Cardiac septum (tissue), 1 donor: ENCODE measurements at regions of chr6 and their contacts with region 1.

Region 1: GRCh38 chr6:141464490-141464889 is 668.2 kb upstream of the GJE1 start:
- DNase-seq: no peak

Region 2: DNA sequence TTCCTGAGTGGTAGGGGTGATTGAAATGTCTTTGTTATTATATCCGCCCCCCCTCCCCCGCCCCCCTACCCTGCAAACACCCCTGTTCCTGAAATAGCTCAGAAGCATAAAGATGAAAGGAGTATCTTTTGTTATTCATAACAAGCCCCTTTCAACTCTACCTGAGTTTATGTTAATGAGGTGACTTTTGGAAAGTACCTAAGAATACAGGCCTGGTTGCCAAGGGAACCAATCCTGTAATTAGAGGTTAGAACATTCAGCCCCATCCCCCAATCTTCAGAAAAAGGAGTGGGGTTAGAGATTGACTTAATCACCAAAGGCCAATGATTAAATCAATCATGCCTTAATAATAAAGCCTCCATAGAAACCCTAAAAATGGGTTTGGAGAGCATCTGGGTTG is 310.9 kb before region 1 on chr6:
- intact Hi-C with region 1: loop called (anchors 10 kb)
- DNase-seq: no peak

Region 3: GRCh38 chr6:141421376-141421775 is 43.1 kb before region 1 on chr6:
- intact Hi-C with region 1: no loop called
- DNase-seq: no peak

Region 4: DNA sequence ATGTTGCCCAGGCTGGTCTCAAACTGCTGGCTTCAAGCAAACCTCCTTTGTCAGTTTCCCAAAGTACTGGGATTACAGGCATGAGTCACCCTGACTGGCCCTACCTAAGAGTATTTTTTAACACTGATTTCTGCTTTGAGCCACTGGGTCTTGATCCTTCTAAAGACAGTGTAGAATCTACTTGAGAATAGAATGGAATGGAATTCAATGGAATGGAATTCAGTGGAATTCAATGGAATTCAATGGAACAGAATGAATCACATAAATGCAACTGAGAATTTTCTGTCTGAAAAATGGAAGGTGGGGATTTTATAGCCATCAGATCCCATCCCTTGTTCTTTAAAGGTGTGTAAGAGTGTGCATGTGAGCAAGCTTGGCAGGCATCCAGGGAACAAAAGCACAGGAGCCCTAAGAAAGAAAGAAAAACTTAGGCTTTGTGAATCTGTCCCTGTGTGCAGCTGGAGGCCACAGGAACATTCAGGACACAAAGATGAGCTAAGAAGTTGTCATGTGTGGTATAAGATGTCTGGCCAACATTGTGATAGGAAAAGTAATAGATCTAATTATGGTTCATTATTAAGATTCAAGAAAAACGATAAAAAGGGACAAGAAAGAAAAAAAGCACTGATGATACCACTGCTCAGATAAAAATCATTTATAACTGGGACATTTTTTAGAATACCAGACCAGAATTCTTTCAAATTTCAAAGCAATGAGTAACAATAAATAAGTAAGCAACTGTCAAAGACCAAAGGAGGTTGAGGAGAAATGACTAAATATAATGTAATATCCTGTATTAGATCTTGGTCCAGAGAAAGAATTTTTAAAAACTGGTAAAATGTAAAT is 12.8 kb before region 1 on chr6:
- intact Hi-C with region 1: no loop called
- DNase-seq: no peak

Region 5: DNA sequence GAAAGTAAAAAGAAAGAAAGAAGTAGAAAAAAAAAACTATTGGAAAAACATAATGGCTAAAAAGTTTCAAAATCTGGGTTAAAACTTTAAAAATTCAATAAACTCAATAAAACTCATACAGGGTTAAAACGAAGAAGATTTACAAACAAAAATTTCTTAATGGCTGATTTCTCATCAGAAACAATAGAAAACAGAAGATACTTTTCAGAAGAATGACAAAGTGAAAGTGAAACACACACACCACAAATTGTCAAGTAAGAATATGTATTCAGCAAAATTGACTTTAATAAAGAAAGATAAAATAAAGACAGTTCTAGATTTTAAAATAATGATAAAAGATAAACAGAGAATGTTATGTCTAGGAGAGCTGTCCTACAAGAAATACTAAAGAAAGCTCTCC is 49.3 kb after region 1 on chr6:
- intact Hi-C with region 1: no loop called
- DNase-seq: no peak